ENCODE measurements at regions of chr6 and their contacts with region 1.

Region 1: DNA sequence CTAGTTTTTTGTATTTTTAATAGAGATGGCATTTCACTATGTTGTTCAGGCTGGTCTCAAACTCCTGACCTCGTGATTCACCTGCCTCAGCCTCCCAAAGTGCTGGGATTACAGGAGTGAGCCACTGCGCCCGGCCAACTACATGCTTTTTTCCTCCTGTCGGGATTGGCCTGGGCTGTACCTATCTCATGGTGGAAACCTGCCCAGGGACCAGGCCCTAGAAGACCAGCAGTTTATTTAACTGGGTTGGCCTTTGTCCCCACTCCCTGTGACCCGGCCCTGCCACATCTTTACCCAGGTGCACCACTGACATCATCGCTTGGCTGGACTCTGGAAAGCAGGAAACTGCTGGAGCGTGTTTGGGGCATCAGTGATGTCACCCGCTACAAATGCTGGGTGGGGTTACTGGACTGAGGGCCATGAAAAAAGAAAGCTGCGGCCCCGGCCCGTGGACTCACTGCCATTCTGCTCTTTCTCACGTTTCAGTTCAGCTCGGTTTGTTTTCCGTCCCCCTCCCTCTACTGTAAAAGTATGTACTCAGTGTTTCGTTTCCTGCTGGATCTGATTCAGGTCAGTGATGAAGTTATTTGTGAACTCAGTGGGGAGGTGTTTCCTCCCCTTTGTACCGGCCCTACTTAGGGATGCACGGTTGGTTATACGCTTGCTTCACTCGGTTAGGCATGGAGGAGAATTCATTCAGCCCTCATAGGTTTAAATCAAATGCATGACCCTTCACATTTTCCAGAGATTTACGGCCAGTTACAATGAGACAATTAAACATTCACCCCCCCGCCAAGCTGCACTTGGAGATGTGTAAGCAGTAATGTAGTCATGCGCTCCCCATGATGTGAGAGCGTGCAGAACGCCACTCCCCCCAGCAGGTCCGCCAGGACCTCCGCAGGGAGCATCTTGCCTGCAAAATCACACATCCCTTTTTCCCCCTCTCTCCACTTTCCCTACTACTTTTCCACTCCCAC is 179.3 kb downstream of the MTHFD1L start:
- DNase-seq: peak; percentile 91
- H3K4me3 ChIP-seq: peak overlapping the region; percentile 10 to 32 (median 28)
- H3K27ac ChIP-seq: peak overlapping the region; percentile 62 to 90 (median 88)
- H3K4me1 ChIP-seq: peaks cover 0 to 41% (median 33%) of the 10 kb centered on the region in 4 donors
- H3K27me3 ChIP-seq: no peaks in the 10 kb centered on the region
- CTCF ChIP-seq: no peak
- EP300 ChIP-seq: peak in 2 of 4 donors; percentile 33 to 68
- POLR2A ChIP-seq: no peak

Region 2: GRCh38 chr6:151121900-151122299 is 77.1 kb after region 1 on chr6:
- intact Hi-C with region 1: loop called (anchors 5 kb)
- DNase-seq: peak; percentile 80
- H3K4me3 ChIP-seq: no peak overlapping the region
- H3K27ac ChIP-seq: peak overlapping the region in 2 of 4 donors; percentile 48 to 68
- H3K4me1 ChIP-seq: peaks cover 0 to 73% (median 37%) of the 10 kb centered on the region in 4 donors
- H3K27me3 ChIP-seq: no peaks in the 10 kb centered on the region
- CTCF ChIP-seq: no peak
- EP300 ChIP-seq: no peak
- POLR2A ChIP-seq: no peak

Region 3: DNA sequence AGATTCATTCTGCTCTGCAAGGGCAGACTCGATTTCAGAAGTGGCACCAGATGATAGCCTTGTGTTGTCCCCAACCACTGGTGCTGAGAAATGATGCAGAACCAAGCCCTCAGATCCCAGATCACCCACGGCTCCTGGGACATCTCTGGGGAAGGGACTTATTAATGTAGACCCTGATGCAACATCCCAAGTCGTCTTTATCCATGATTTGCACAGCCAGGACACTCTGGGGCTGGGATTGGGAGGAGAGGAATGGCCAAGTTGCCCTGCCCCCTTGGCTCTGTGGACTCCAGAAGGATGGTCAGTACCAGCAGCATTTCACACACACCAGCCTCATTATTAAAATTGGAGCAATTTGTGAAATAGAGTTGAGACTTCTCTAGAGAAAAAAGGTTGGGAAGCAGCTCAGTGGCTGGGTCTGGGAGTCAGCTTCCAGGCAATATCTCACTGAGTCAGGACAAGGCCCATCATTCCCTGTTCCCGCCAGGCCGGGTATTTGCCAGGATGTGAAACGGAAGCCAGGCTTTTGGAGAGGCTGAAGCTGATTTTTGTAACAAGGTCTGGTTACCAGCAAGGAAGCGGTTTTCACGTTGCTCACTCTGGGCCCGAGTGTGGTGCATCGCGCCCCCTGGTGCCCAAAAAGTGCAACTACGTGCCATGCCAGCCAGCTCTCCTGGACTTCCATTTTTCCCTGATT is 279.2 kb after region 1 on chr6:
- intact Hi-C with region 1: no loop called
- DNase-seq: peak; percentile 97
- H3K4me3 ChIP-seq: no peak overlapping the region
- H3K27ac ChIP-seq: peak overlapping the region; percentile 71 to 93 (median 82)
- H3K4me1 ChIP-seq: peaks cover 0 to 37% (median 27%) of the 10 kb centered on the region in 4 donors
- H3K27me3 ChIP-seq: no peaks in the 10 kb centered on the region
- CTCF ChIP-seq: peak; percentile 98 to 99 (median 98)
- EP300 ChIP-seq: peak in 3 of 4 donors; percentile 39 to 75 (median 71)
- POLR2A ChIP-seq: no peak

Measured in sigmoid colon (tissue), 7 donors.